Sigmoid colon (tissue), 7 donors: ENCODE measurements at regions of chr12 and their contacts with region 1.

Region 1: GRCh38 chr12:88153959-88154358 is 11.9 kb downstream of the TMTC3 start:
- DNase-seq: no peak
- H3K4me3 ChIP-seq: no peak overlapping the region
- H3K27ac ChIP-seq: no peak overlapping the region
- H3K4me1 ChIP-seq: peaks cover 0 to 14% (median 5%) of the 10 kb centered on the region in 4 donors
- H3K27me3 ChIP-seq: no peaks in the 10 kb centered on the region
- CTCF ChIP-seq: peak in 3 of 4 experiments; percentile 27 to 40 (median 30)
- EP300 ChIP-seq: no peak
- POLR2A ChIP-seq: no peak

Region 2: GRCh38 chr12:88241862-88242570 is 88.1 kb after region 1 on chr12:
- intact Hi-C with region 1: loop called (anchors 10 kb)
- DNase-seq: peak; percentile 71
- H3K4me3 ChIP-seq: no peak overlapping the region
- H3K27ac ChIP-seq: peak overlapping the region in 3 of 4 donors; percentile 53 to 68 (median 53)
- H3K4me1 ChIP-seq: peaks cover 0 to 27% (median 10%) of the 10 kb centered on the region in 4 donors
- H3K27me3 ChIP-seq: no peaks in the 10 kb centered on the region
- CTCF ChIP-seq: no peak
- EP300 ChIP-seq: no peak
- POLR2A ChIP-seq: no peak